GM12878 (cell line): ENCODE measurements at regions of chr14 and their contacts with region 1.

Region 1: GRCh38 chr14:45728434-45729225 is 475.6 kb upstream of the MIS18BP1 start:
- DNase-seq: no peak
- ATAC-seq: peak; percentile 66
- H3K4me3 ChIP-seq: no peak overlapping the region
- H3K27ac ChIP-seq: no peak overlapping the region
- H3K4me1 ChIP-seq: no peaks in the 10 kb centered on the region
- H3K27me3 ChIP-seq: no peaks in the 10 kb centered on the region
- CTCF ChIP-seq: no peak
- EP300 ChIP-seq: no peak
- POLR2A ChIP-seq: no peak
- RAD21 ChIP-seq: no peak

Region 2: GRCh38 chr14:45619831-45620230 is 108.8 kb before region 1 on chr14:
- CTCF ChIA-PET with region 1: no interaction called
- POLR2A ChIA-PET with region 1: no interaction called
- RAD21 ChIA-PET with region 1: no interaction called
- SMC1A ChIA-PET with region 1: no interaction called
- in situ Hi-C with region 1: no loop called
- intact Hi-C with region 1: no loop called
- DNase-seq: no peak
- ATAC-seq: no peak
- H3K4me3 ChIP-seq: no peak overlapping the region
- H3K27ac ChIP-seq: no peak overlapping the region
- H3K4me1 ChIP-seq: no peaks in the 10 kb centered on the region
- H3K27me3 ChIP-seq: no peaks in the 10 kb centered on the region
- CTCF ChIP-seq: no peak
- EP300 ChIP-seq: no peak
- POLR2A ChIP-seq: no peak
- RAD21 ChIP-seq: no peak

Region 3: DNA sequence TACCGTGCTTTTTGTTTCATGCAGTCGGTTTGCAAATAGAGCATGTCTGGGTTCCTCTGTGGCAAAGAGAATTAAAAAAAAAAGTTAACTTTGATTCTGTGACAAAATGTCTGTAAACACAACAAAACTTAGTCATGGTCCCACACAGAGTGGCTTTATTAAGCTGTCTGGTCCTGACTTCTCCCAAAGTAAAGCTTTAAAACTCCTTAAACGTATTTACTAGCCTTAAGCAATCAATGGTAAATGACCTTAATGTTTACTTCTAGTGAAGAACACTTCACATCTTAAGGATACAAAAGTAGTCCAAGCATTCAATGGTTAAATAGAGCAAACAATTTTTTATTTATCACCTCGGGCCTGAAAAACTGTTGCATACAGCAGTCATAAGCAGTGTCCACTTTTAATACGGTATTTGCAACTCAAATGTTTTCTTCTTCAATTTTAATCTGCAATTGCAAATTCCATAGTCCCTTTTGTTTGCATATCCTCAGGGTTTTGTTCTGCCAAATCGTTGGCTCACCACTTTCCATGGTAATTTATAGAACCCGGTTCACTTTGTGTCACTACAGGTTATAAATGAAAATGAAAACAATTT is 22.6 kb before region 1 on chr14:
- CTCF ChIA-PET with region 1: no interaction called
- POLR2A ChIA-PET with region 1: interaction called, 4 read pairs
- RAD21 ChIA-PET with region 1: interaction called, 6 read pairs
- SMC1A ChIA-PET with region 1: interaction called, 13 read pairs
- in situ Hi-C with region 1: no loop called
- intact Hi-C with region 1: no loop called
- DNase-seq: no peak
- ATAC-seq: no peak
- H3K4me3 ChIP-seq: no peak overlapping the region
- H3K27ac ChIP-seq: no peak overlapping the region
- H3K4me1 ChIP-seq: no peaks in the 10 kb centered on the region
- H3K27me3 ChIP-seq: no peaks in the 10 kb centered on the region
- CTCF ChIP-seq: no peak
- EP300 ChIP-seq: no peak
- POLR2A ChIP-seq: no peak
- RAD21 ChIP-seq: no peak

Region 4: GRCh38 chr14:45716572-45716971 is 12.1 kb before region 1 on chr14:
- CTCF ChIA-PET with region 1: interaction called, 8 read pairs
- POLR2A ChIA-PET with region 1: interaction called, 4 read pairs
- RAD21 ChIA-PET with region 1: interaction called, 13 read pairs
- SMC1A ChIA-PET with region 1: interaction called, 25 read pairs
- in situ Hi-C with region 1: no loop called
- intact Hi-C with region 1: no loop called
- DNase-seq: no peak
- ATAC-seq: no peak; the same call in 2 of the 3 replicates
- H3K4me3 ChIP-seq: no peak overlapping the region
- H3K27ac ChIP-seq: no peak overlapping the region
- H3K4me1 ChIP-seq: no peaks in the 10 kb centered on the region
- H3K27me3 ChIP-seq: no peaks in the 10 kb centered on the region
- CTCF ChIP-seq: no peak
- EP300 ChIP-seq: no peak
- POLR2A ChIP-seq: no peak
- RAD21 ChIP-seq: no peak

Region 5: DNA sequence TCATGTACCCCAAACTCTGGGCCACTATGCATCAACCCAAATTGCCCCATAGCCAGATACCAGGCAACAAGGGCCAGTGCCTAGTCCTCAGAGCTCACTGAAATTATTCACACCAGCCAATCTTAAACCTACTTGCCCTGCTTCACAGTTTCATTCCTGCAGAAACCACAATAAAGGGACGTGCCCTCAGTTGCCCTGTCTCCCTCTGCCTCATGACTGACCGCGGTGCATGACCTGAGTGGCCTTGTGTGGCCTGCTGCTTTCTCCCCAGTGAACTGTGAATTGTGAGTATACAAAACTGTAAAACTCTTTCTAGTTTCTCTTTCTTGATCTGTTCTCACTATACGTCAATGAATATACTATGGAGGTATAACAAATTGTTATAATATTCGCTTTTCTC is 15.3 kb after region 1 on chr14:
- CTCF ChIA-PET with region 1: interaction called, 6 read pairs
- POLR2A ChIA-PET with region 1: interaction called, 4 read pairs
- RAD21 ChIA-PET with region 1: interaction called, 16 read pairs
- SMC1A ChIA-PET with region 1: interaction called, 17 read pairs
- in situ Hi-C with region 1: no loop called
- intact Hi-C with region 1: no loop called
- DNase-seq: no peak
- ATAC-seq: peak; percentile 93
- H3K4me3 ChIP-seq: no peak overlapping the region
- H3K27ac ChIP-seq: no peak overlapping the region
- H3K4me1 ChIP-seq: no peaks in the 10 kb centered on the region
- H3K27me3 ChIP-seq: no peaks in the 10 kb centered on the region
- CTCF ChIP-seq: no peak
- EP300 ChIP-seq: no peak
- POLR2A ChIP-seq: no peak
- RAD21 ChIP-seq: no peak

Region 6: GRCh38 chr14:45868377-45868776 is 139.7 kb after region 1 on chr14:
- CTCF ChIA-PET with region 1: no interaction called
- POLR2A ChIA-PET with region 1: no interaction called
- RAD21 ChIA-PET with region 1: interaction called, 11 read pairs
- SMC1A ChIA-PET with region 1: interaction called, 4 read pairs
- in situ Hi-C with region 1: no loop called
- intact Hi-C with region 1: no loop called
- DNase-seq: peak; percentile 94
- ATAC-seq: peak; percentile 80
- H3K4me3 ChIP-seq: peak overlapping the region; percentile 43; the same call in 1 of the 2 replicates
- H3K27ac ChIP-seq: peak overlapping the region; percentile 93
- H3K4me1 ChIP-seq: peaks cover 16% of the 10 kb centered on the region
- H3K27me3 ChIP-seq: no peaks in the 10 kb centered on the region
- CTCF ChIP-seq: no peak
- EP300 ChIP-seq: no peak
- POLR2A ChIP-seq: no peak
- RAD21 ChIP-seq: 0 out of 2 replicates have a peak, but pooled peaks have one; percentile 3

Region 7: GRCh38 chr14:46686652-46687051 is 958.0 kb after region 1 on chr14:
- CTCF ChIA-PET with region 1: no interaction called
- POLR2A ChIA-PET with region 1: no interaction called
- RAD21 ChIA-PET with region 1: no interaction called
- SMC1A ChIA-PET with region 1: no interaction called
- in situ Hi-C with region 1: no loop called
- intact Hi-C with region 1: no loop called
- DNase-seq: no peak
- ATAC-seq: peak; percentile 45; the same call in 2 of the 3 replicates
- H3K4me3 ChIP-seq: no peak overlapping the region
- H3K27ac ChIP-seq: no peak overlapping the region
- H3K4me1 ChIP-seq: no peaks in the 10 kb centered on the region
- H3K27me3 ChIP-seq: no peaks in the 10 kb centered on the region
- CTCF ChIP-seq: no peak
- EP300 ChIP-seq: no peak
- POLR2A ChIP-seq: no peak
- RAD21 ChIP-seq: no peak